Caco-2 (cell line): ENCODE measurements at regions of chr16 and their contacts with region 1.

Region 1: DNA sequence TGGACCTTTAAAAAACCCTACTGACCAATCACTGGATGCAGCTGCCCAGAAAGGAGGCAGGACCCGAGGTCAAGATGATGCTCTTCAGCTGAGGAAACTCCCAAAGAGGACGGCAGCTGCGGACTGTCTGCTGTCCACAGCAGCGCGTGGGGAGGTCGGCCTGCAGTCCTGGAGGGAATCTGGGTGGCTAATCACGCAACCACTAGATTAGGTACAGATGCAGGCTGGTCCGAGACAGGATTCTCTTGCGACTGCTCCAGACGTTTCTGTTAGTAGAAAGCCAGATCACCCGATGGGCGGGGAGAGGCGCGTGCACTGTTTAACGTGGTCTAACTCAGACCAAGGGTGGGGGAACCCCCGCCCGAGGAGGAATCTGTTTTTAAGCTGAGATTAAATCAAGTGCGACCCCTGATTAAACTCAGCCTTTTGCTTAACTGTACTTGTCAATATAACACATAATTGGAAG is 8.8 kb downstream of the CTRB2 start:
- DNase-seq: peak in 1 of 2 experiments; percentile 27
- H3K4me3 ChIP-seq: peak overlapping the region; percentile 21
- H3K4me3 Mint-ChIP-seq: peak overlapping the region; percentile 58
- H3K27ac Mint-ChIP-seq: no peak overlapping the region
- H3K4me1 ChIP-seq: no peaks in the 10 kb centered on the region
- H3K4me1 Mint-ChIP-seq: peaks cover 11% of the 10 kb centered on the region
- H3K27me3 ChIP-seq: no peaks in the 10 kb centered on the region
- H3K27me3 Mint-ChIP-seq: peaks cover 3% of the 10 kb centered on the region
- CTCF ChIP-seq: no peak

Region 2: GRCh38 chr16:75064403-75065148 is 133.6 kb before region 1 on chr16:
- CTCF ChIA-PET with region 1: no interaction called
- POLR2A ChIA-PET with region 1: no interaction called
- intact Hi-C with region 1: no loop called
- DNase-seq: no peak
- H3K4me3 ChIP-seq: no peak overlapping the region
- H3K4me3 Mint-ChIP-seq: peak overlapping the region; percentile 64
- H3K27ac Mint-ChIP-seq: peak overlapping the region; percentile 94
- H3K4me1 ChIP-seq: peaks cover 64% of the 10 kb centered on the region
- H3K4me1 Mint-ChIP-seq: peaks cover 39% of the 10 kb centered on the region
- H3K27me3 ChIP-seq: no peaks in the 10 kb centered on the region
- H3K27me3 Mint-ChIP-seq: no peaks in the 10 kb centered on the region
- CTCF ChIP-seq: no peak

Region 3: DNA sequence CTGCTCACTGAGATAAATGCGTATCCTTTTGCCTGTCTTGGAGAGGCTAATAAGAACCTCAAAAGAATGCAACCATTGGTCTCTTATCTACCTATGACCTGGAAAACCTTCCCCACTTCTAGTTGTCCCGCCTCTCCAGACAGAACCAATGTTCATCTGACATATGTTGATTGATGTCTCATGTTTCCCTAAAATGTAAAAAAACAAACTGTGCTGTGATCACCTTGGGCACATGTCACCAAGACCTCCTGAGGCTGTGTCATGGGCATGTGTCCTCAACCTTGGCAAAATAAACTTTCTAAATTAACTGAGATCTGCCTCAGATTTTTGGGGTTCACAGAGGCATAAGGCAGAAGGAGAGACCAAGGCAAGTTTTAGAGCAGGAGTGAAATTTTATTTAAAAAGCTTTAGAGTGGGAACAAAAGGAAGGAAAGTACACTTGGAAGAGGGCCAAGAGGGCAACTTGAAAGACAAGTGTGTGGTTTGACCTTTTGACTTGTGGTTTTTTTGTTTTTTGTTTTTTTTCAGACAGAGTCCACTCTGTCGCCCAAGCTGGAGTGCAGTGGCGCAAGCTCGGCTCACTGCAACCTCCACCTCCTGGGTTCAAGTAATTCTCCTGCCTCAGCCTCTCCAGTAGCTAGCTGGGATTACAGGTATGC is 68.5 kb before region 1 on chr16:
- CTCF ChIA-PET with region 1: no interaction called
- POLR2A ChIA-PET with region 1: no interaction called
- intact Hi-C with region 1: no loop called
- DNase-seq: peak in 1 of 2 experiments; percentile 63
- H3K4me3 ChIP-seq: no peak overlapping the region
- H3K4me3 Mint-ChIP-seq: peak overlapping the region; percentile 12
- H3K27ac Mint-ChIP-seq: peak overlapping the region; percentile 61
- H3K4me1 ChIP-seq: peaks cover 45% of the 10 kb centered on the region
- H3K4me1 Mint-ChIP-seq: peaks cover 26% of the 10 kb centered on the region
- H3K27me3 ChIP-seq: no peaks in the 10 kb centered on the region
- H3K27me3 Mint-ChIP-seq: no peaks in the 10 kb centered on the region
- CTCF ChIP-seq: no peak

Region 4: DNA sequence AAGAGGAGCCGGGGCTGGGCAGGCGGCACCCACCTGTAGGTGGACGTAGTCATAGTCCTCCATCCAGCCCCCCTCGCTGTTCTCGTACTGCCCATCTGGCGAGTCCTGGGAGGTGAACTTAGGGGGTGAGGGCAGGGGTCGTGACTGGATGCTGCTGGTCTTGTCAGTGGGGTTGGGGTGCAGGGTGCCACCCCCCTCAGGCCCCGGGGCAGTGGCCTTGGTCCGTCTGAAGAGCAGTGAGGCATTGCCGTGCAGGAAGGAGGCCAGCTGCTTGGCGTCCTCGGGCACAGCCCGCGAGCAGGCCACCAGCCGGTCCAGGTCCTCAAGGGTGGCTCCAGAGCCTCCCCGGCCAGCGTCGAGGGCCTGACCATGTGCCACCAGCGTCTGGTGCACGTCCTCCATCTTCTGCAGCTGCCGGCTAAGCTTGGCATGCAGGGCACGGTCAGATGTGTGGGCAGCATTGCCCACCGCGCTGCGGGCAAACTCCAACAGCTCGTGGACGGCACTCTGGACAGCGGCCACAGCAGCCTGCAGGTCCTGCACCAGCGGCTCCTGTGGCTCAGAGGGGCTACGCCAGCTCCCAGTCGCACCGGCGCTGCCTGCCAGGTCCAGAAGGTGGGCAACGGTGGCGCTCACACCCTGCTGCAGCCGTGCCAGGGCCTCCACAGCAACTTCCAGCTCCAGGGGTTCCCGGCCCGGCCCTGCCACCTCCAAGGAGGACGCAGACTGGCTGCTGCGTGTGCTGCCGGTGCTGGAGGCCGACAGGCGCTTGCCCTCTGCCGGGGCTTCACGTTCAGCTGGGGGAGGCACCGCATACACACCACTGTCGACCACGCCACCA is 36.9 kb after region 1 on chr16:
- CTCF ChIA-PET with region 1: interaction called, 8 read pairs
- POLR2A ChIA-PET with region 1: no interaction called
- intact Hi-C with region 1: loop called (anchors 5 kb)
- DNase-seq: no peak
- H3K4me3 ChIP-seq: no peak overlapping the region
- H3K4me3 Mint-ChIP-seq: no peak overlapping the region
- H3K27ac Mint-ChIP-seq: peak overlapping the region; percentile 60
- H3K4me1 ChIP-seq: no peaks in the 10 kb centered on the region
- H3K4me1 Mint-ChIP-seq: peaks cover 6% of the 10 kb centered on the region
- H3K27me3 ChIP-seq: no peaks in the 10 kb centered on the region
- H3K27me3 Mint-ChIP-seq: no peaks in the 10 kb centered on the region
- CTCF ChIP-seq: no peak

Region 5: GRCh38 chr16:75385507-75386152 is 187.5 kb after region 1 on chr16:
- CTCF ChIA-PET with region 1: interaction called, 49 read pairs
- POLR2A ChIA-PET with region 1: no interaction called
- intact Hi-C with region 1: loop called (anchors 1 kb)
- DNase-seq: peak in 1 of 2 experiments; percentile 37
- H3K4me3 ChIP-seq: no peak overlapping the region
- H3K4me3 Mint-ChIP-seq: no peak overlapping the region
- H3K27ac Mint-ChIP-seq: no peak overlapping the region
- H3K4me1 ChIP-seq: no peaks in the 10 kb centered on the region
- H3K4me1 Mint-ChIP-seq: no peaks in the 10 kb centered on the region
- H3K27me3 ChIP-seq: no peaks in the 10 kb centered on the region
- H3K27me3 Mint-ChIP-seq: no peaks in the 10 kb centered on the region
- CTCF ChIP-seq: peak; percentile 62 to 65

Region 6: GRCh38 chr16:75452464-75453190 is 254.5 kb after region 1 on chr16:
- CTCF ChIA-PET with region 1: interaction called, 11 read pairs
- POLR2A ChIA-PET with region 1: no interaction called
- intact Hi-C with region 1: no loop called
- DNase-seq: no peak
- H3K4me3 ChIP-seq: no peak overlapping the region
- H3K4me3 Mint-ChIP-seq: no peak overlapping the region
- H3K27ac Mint-ChIP-seq: no peak overlapping the region
- H3K4me1 ChIP-seq: no peaks in the 10 kb centered on the region
- H3K4me1 Mint-ChIP-seq: peaks cover 6% of the 10 kb centered on the region
- H3K27me3 ChIP-seq: no peaks in the 10 kb centered on the region
- H3K27me3 Mint-ChIP-seq: no peaks in the 10 kb centered on the region
- CTCF ChIP-seq: no peak

Region 7: DNA sequence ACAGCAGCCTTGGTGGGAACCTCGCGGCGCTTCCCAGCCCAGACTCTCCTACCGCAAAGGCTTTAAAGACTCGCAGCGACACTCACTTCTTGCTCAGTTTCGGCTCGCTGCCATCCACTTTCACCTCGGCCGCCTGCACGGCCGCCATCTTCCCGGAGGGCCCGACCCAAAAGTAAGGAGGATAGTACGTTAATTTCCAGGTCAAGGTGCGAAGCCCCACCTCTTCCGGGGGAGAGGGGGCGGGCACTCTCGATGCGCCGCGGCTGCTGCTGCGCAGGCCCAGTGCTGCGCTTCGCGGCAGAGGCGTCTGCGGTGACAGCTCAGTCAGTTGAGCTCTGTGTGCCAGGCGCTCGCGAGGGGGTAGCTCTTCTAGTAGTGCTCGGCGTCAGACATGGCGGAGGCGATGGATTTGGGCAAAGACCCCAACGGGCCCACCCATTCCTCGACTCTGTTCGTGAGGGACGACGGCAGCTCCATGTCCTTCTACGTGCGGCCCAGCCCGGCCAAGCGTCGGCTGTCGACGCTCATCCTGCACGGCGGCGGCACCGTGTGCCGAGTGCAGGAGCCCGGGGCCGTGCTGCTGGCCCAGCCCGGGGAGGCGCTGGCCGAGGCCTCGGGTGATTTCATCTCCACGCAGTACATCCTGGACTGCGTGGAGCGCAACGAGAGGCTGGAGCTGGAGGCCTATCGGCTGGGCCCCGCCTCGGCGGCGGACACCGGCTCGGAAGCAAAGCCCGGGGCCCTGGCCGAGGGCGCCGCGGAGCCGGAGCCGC is 449.5 kb after region 1 on chr16 and contains the starts of genes KARS1 and TERF2IP:
- CTCF ChIA-PET with region 1: no interaction called
- POLR2A ChIA-PET with region 1: no interaction called
- intact Hi-C with region 1: loop called (anchors 5 kb)
- DNase-seq: peak; percentile 93 to 95
- H3K4me3 ChIP-seq: peak within 1 kb of the TSS; percentile 97
- H3K4me3 Mint-ChIP-seq: peak within 1 kb of the TSS; percentile 91
- H3K27ac Mint-ChIP-seq: peak within 1 kb of the TSS; percentile 98
- H3K4me1 ChIP-seq: peaks cover 12% of the 10 kb centered on the region
- H3K4me1 Mint-ChIP-seq: peaks cover 18% of the 10 kb centered on the region
- H3K27me3 ChIP-seq: no peaks in the 10 kb centered on the region
- H3K27me3 Mint-ChIP-seq: no peaks in the 10 kb centered on the region
- CTCF ChIP-seq: no peak
- total RNA-seq, gene KARS1: 244 and 245 TPM in 2 replicates
- total RNA-seq, gene TERF2IP: 25.1 and 27.1 TPM in 2 replicates